Naive thymus-derived CD4-positive, alpha-beta T cell (primary cell): ENCODE measurements at regions of chr5 and their contacts with region 1.

Region 1: GRCh38 chr5:140855772-140856674 is at the start of gene PCDHA10:
- DNase-seq: no peak
- ATAC-seq: no peak
- H3K4me3 ChIP-seq: no peak within 1 kb of the TSS
- H3K4me3 Mint-ChIP-seq: peak within 1 kb of the TSS in 1 of 10 donors; percentile 3
- H3K27ac ChIP-seq: no peak within 1 kb of the TSS
- H3K27ac Mint-ChIP-seq: no peak within 1 kb of the TSS
- H3K4me1 ChIP-seq: no peaks in the 10 kb centered on the region
- H3K4me1 Mint-ChIP-seq: no peaks in the 10 kb centered on the region
- H3K27me3 ChIP-seq: no peaks in the 10 kb centered on the region
- H3K27me3 Mint-ChIP-seq: peaks cover 0 to 48% (median 36%) of the 10 kb centered on the region in 5 donors
- total RNA-seq, gene PCDHA10: not detected

Region 2: GRCh38 chr5:140800816-140801493 is 55.1 kb before region 1 on chr5 and contains the start of gene PCDHA3:
- CTCF ChIA-PET with region 1: no interaction called
- POLR2A ChIA-PET with region 1: no interaction called
- intact Hi-C with region 1: loop called in 1 of 2 experiments (anchors 5 kb)
- DNase-seq: no peak
- ATAC-seq: no peak
- H3K4me3 ChIP-seq: no peak within 1 kb of the TSS
- H3K4me3 Mint-ChIP-seq: no peak within 1 kb of the TSS
- H3K27ac ChIP-seq: no peak within 1 kb of the TSS
- H3K27ac Mint-ChIP-seq: no peak within 1 kb of the TSS
- H3K4me1 ChIP-seq: no peaks in the 10 kb centered on the region
- H3K4me1 Mint-ChIP-seq: no peaks in the 10 kb centered on the region
- H3K27me3 ChIP-seq: no peaks in the 10 kb centered on the region
- H3K27me3 Mint-ChIP-seq: peaks cover 0 to 53% (median 44%) of the 10 kb centered on the region in 5 donors
- total RNA-seq, gene PCDHA3: not detected